ENCODE measurements at regions of chr2 and their contacts with region 1.

Region 1: DNA sequence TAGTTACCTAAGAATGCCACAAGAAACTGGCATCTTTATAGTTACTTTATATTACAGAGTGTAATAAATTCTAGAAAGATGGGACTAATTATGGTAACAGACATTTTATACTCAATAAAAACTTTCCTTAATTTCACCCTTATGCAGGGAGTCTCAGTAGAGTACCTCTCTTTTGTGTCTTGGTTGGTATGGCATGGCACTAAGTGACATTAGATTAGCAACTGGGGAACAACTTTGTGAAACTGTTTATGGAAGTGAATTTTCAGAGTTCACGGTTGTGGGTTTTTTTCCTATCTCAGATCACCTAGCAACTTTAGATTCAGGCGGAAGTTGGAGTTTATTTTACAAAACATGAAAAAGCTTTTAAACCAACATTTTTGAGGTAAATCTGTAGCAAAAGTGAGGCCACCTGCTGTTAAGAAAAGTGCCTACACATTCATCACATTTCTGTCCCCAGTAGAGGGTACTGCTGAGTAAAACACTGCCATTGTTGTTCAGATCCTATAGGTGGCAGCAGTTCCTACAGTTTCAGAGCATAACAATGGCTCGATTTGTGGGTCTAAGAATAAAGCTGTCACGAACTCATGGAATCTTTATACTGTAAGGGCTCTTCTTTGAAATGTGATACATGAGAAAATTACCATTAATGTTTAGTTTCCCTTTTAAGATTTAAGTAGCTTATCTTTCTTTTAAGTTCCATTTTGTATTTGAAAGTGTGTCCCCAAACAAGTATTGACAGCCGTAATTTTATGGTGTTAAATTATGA is 117.6 kb downstream of the CAMKMT start:
- DNase-seq: peak; percentile 84
- ATAC-seq: peak; percentile 99
- H3K4me3 ChIP-seq: no peak overlapping the region
- H3K27ac ChIP-seq: no peak overlapping the region
- H3K4me1 ChIP-seq: no peaks in the 10 kb centered on the region
- H3K27me3 ChIP-seq: no peaks in the 10 kb centered on the region
- CTCF ChIP-seq: peak; percentile 96

Region 2: DNA sequence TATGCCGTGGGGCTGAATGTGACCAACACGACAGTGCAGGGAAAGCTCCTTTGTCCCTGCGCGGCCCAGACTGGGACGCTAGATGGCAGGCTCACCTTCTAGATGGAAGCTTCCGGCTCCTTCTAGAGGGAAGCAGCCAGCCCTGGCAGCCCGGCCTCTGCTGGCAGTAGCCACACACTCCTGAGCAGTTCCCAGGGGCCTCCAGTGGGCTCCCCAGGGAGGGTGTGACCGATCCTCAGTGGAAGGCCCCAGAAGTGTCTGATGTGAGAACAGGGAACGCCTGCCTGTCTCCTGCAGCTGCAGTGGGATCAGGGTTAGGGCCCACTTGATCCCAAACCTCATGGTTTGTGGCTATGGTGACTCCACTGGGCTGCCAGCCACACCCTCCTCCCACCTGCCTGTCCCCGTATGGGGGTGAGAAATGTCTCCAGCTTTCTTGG is 435.0 kb before region 1 on chr2:
- CTCF ChIA-PET with region 1: interaction called, 9 read pairs
- POLR2A ChIA-PET with region 1: no interaction called
- in situ Hi-C with region 1: no loop called
- intact Hi-C with region 1: loop called (anchors 10 kb)
- DNase-seq: peak; percentile 68
- ATAC-seq: peak; percentile 100
- H3K4me3 ChIP-seq: no peak overlapping the region
- H3K27ac ChIP-seq: peak overlapping the region; percentile 67
- H3K4me1 ChIP-seq: 0 out of 2 replicates have a peak, but pooled peaks cover 4% of the 10 kb centered on the region
- H3K27me3 ChIP-seq: no peaks in the 10 kb centered on the region
- CTCF ChIP-seq: peak; percentile 92

Region 3: DNA sequence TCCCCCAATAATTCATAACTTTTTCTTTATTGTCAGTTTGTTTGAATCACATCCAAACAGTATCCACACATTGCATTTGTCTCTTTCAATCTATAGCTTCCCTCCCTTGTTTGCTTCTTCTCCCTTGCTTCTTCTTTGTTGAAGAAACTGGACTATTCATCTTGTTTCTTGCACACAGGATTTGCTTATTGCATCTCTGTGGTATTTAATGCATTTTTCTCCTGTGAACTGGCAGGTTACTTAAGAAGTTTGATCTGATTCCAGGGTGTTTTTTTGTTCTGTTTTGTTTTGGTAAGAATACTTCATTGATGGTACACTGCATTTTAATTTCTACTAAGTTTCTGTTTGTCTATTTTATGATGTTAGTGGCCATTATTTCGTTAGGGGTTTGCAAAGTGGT is 49.3 kb after region 1 on chr2:
- CTCF ChIA-PET with region 1: no interaction called
- POLR2A ChIA-PET with region 1: no interaction called
- in situ Hi-C with region 1: no loop called
- intact Hi-C with region 1: no loop called
- DNase-seq: no peak
- ATAC-seq: no peak
- H3K4me3 ChIP-seq: no peak overlapping the region
- H3K27ac ChIP-seq: no peak overlapping the region
- H3K4me1 ChIP-seq: no peaks in the 10 kb centered on the region; the same call in 1 of the 2 replicates
- H3K27me3 ChIP-seq: no peaks in the 10 kb centered on the region
- CTCF ChIP-seq: no peak

Region 4: DNA sequence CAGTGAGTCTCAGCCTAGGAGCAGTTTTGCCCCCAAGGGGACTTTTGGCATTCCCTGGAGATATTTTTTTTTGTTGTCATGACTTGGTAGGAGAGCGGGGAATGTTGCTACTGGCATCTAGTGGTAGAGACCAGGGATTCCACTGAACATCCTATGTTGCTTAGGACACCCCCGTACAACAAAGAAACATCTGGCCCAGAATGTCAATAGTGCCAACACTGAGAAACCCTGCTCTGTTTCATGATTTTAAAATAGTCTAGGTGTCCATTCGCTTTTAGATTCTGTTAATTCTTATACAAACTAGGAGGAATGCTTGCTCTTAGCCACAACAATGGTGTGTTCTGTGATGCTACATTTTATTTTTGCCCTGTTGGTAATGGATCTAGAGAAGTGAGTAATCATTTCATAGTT is 236.4 kb after region 1 on chr2:
- CTCF ChIA-PET with region 1: interaction called, 11 read pairs
- POLR2A ChIA-PET with region 1: no interaction called
- in situ Hi-C with region 1: no loop called
- intact Hi-C with region 1: loop called (anchors 10 kb)
- DNase-seq: no peak
- ATAC-seq: peak; percentile 85
- H3K4me3 ChIP-seq: no peak overlapping the region
- H3K27ac ChIP-seq: no peak overlapping the region
- H3K4me1 ChIP-seq: no peaks in the 10 kb centered on the region
- H3K27me3 ChIP-seq: no peaks in the 10 kb centered on the region
- CTCF ChIP-seq: peak; percentile 81

Measured in Panc1 (cell line).